ENCODE measurements at regions of chr3 and their contacts with region 1.

Region 1: DNA sequence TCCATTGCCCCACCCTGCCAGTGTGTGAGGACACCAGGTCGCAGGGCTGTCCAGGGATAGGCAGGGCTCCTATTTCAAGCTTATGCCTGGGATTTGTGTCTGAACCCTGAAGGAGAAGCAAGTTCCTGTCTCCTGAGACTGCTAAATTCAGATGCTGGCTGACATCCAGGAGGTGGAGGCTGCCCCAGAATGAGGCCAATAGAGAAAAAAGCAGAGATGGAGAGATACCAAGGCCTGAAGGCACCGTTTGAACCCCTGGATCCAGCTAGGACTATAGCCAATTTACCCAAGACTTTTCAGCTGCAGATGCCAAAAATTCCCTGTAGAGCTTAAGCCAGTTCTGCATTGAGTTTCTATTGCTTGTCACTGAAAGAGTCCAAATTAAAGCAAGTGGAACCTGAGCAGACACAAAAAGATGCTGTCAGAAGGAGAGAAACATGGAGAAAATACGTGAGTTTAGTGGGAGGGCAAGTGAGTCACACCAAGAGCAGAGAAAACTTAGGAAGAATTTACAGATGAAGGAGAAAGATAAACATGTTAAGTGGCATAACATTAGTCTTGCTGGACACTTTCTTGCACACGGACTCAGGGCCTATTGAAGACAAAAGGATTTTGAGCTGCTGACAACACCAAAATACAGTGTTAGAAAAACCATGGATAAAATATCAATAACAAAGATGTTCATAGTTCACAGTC is 148.6 kb downstream of the CNTN3 start:
- DNase-seq: peak in 1 of 2 donors; percentile 50
- ATAC-seq: peak; percentile 56
- H3K4me3 ChIP-seq: no peak overlapping the region
- H3K27ac ChIP-seq: peak overlapping the region; percentile 39 to 68
- H3K4me1 ChIP-seq: no peaks in the 10 kb centered on the region
- H3K27me3 ChIP-seq: no peaks in the 10 kb centered on the region

Region 2: GRCh38 chr3:74173090-74173489 is 292.8 kb before region 1 on chr3:
- intact Hi-C with region 1: no loop called
- DNase-seq: no peak
- ATAC-seq: no peak
- H3K4me3 ChIP-seq: no peak overlapping the region
- H3K27ac ChIP-seq: no peak overlapping the region
- H3K4me1 ChIP-seq: no peaks in the 10 kb centered on the region
- H3K27me3 ChIP-seq: no peaks in the 10 kb centered on the region

Region 3: GRCh38 chr3:74515451-74515850 is 49.6 kb after region 1 on chr3:
- intact Hi-C with region 1: no loop called
- DNase-seq: no peak
- ATAC-seq: no peak
- H3K4me3 ChIP-seq: no peak overlapping the region
- H3K27ac ChIP-seq: peak overlapping the region in 1 of 2 donors; percentile 43
- H3K4me1 ChIP-seq: peaks cover 5% of the 10 kb centered on the region in 2 donors
- H3K27me3 ChIP-seq: no peaks in the 10 kb centered on the region

Region 4: GRCh38 chr3:74561881-74562280 is 96.0 kb after region 1 on chr3:
- intact Hi-C with region 1: loop called in 1 of 2 experiments (anchors 5 kb)
- DNase-seq: no peak
- ATAC-seq: no peak
- H3K4me3 ChIP-seq: no peak overlapping the region
- H3K27ac ChIP-seq: no peak overlapping the region
- H3K4me1 ChIP-seq: peaks cover 0 to 5% of the 10 kb centered on the region in 2 donors
- H3K27me3 ChIP-seq: no peaks in the 10 kb centered on the region

Region 5: GRCh38 chr3:74614107-74614967 is 148.5 kb after region 1 on chr3 and contains the start of gene CNTN3:
- intact Hi-C with region 1: loop called in 1 of 2 experiments (anchors 5 kb)
- DNase-seq: peak; percentile 47 to 79
- ATAC-seq: peak; percentile 62
- H3K4me3 ChIP-seq: peak within 1 kb of the TSS; percentile 80 to 89
- H3K27ac ChIP-seq: peak within 1 kb of the TSS in 1 of 2 donors; percentile 56
- H3K4me1 ChIP-seq: no peaks in the 10 kb centered on the region
- H3K27me3 ChIP-seq: no peaks in the 10 kb centered on the region
- total RNA-seq, gene CNTN3: 3.4 to 9.8 TPM

Region 6: GRCh38 chr3:74824366-74824765 is 358.5 kb after region 1 on chr3:
- intact Hi-C with region 1: no loop called
- DNase-seq: no peak
- ATAC-seq: no peak
- H3K4me3 ChIP-seq: no peak overlapping the region
- H3K27ac ChIP-seq: no peak overlapping the region
- H3K4me1 ChIP-seq: no peaks in the 10 kb centered on the region
- H3K27me3 ChIP-seq: no peaks in the 10 kb centered on the region